ENCODE measurements at regions of chr1 and their contacts with region 1.

Region 1: GRCh38 chr1:7366955-7367665 is 404.0 kb upstream of the VAMP3 start:
- DNase-seq: peak in 1 of 2 donors; percentile 46
- ATAC-seq: peak in 3 of 8 donors; percentile 2 to 16 (median 3)
- H3K4me3 ChIP-seq: no peak overlapping the region
- H3K27ac ChIP-seq: peak overlapping the region in 9 of 10 donors; percentile 31 to 81 (median 69)
- H3K4me1 ChIP-seq: peaks cover 0 to 42% (median 6%) of the 10 kb centered on the region in 9 donors
- H3K27me3 ChIP-seq: no peaks in the 10 kb centered on the region
- CTCF ChIP-seq: no peak

Region 2: GRCh38 chr1:7196036-7196911 is 170.8 kb before region 1 on chr1:
- intact Hi-C with region 1: no loop called
- DNase-seq: no peak
- ATAC-seq: no peak
- H3K4me3 ChIP-seq: no peak overlapping the region
- H3K27ac ChIP-seq: no peak overlapping the region
- H3K4me1 ChIP-seq: no peaks in the 10 kb centered on the region
- H3K27me3 ChIP-seq: peaks cover 0 to 30% (median 19%) of the 10 kb centered on the region in 7 donors
- CTCF ChIP-seq: no peak

Region 3: DNA sequence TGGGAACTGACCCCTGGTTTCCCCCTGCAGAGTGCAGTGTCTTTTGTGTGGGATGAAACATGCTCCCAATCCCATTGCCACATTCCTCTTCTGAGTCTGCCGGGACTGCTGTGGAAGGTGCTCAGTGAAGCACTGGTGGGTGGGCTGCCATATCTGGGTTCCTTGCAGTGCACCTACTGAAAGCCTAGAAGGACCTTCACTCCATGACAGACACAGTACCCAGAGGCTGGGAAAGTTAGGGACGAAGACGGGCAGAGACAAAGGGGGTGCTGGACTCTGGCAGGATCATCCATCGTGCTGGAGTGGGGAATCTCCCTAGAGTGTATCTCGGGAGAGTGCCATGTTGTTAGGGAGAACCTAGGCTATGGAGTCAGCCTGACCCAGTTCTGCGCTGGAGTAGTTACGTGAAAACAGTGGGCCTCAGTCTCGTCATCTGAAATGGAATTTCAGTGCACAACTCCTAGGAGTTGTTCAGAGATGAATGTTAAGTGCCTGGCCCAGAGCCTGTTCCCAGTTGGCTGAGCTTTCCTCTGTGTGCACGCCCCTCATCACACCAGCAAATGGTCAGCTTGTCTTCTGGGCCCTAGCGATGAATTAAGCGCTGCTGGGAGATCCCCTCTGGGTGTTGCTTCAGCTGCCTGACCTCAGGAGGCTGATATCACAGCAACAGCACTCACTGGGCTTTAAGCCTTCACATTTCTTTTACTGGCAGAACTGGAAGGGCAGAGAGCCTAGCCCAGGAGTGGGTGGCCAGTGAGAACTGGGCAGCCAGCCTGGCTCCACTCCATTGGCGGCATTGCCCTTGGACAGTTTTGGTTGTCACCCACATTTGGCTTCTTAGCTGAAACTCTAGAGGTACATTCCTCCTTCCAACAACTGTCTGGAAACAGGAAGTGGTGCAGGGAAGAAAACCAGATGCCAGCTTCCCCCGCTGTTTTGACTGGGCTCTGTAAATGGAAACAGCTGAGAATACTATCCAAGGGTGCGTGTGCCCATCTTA is 75.8 kb before region 1 on chr1:
- intact Hi-C with region 1: loop called in 4 of 10 experiments (anchors 2 to 10 kb)
- DNase-seq: peak; percentile 66 to 81
- ATAC-seq: peak; percentile 78 to 94 (median 91)
- H3K4me3 ChIP-seq: no peak overlapping the region
- H3K27ac ChIP-seq: peak overlapping the region in 9 of 10 donors; percentile 31 to 79 (median 64)
- H3K4me1 ChIP-seq: peaks cover 0 to 26% (median 14%) of the 10 kb centered on the region in 9 donors
- H3K27me3 ChIP-seq: no peaks in the 10 kb centered on the region
- CTCF ChIP-seq: no peak

Region 4: GRCh38 chr1:7299329-7299799 is 67.7 kb before region 1 on chr1:
- intact Hi-C with region 1: loop called in 3 of 10 experiments (anchors 5 to 10 kb)
- DNase-seq: peak; percentile 56 to 59
- ATAC-seq: peak; percentile 63 to 94 (median 86)
- H3K4me3 ChIP-seq: no peak overlapping the region
- H3K27ac ChIP-seq: peak overlapping the region in 3 of 10 donors; percentile 2 to 77 (median 4)
- H3K4me1 ChIP-seq: peaks cover 0 to 18% (median 15%) of the 10 kb centered on the region in 9 donors
- H3K27me3 ChIP-seq: no peaks in the 10 kb centered on the region
- CTCF ChIP-seq: no peak

Region 5: DNA sequence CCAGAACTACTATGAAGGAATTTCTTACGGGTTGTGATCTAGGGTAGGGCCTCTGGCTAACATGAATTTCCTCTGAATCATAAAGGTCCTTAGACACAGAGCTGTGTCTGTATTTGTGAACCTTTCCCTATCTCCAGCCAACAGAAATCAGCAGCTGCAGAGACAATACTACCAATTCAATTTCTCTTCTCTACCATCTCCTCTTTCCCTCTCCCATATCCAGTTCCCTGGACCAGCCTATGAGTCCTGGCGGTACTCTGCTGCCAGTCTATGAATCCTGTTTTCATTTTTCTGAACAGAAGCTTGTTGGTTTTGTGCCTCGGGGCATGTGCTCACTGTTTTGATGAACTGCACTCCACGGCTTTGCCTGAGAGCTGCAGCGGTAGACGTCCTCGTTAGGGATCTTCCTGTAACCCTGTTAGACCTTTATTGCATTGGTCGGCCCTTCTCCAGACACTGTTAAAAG is 54.0 kb before region 1 on chr1:
- intact Hi-C with region 1: no loop called
- DNase-seq: no peak
- ATAC-seq: no peak
- H3K4me3 ChIP-seq: no peak overlapping the region
- H3K27ac ChIP-seq: no peak overlapping the region
- H3K4me1 ChIP-seq: no peaks in the 10 kb centered on the region
- H3K27me3 ChIP-seq: no peaks in the 10 kb centered on the region
- CTCF ChIP-seq: no peak

Region 6: DNA sequence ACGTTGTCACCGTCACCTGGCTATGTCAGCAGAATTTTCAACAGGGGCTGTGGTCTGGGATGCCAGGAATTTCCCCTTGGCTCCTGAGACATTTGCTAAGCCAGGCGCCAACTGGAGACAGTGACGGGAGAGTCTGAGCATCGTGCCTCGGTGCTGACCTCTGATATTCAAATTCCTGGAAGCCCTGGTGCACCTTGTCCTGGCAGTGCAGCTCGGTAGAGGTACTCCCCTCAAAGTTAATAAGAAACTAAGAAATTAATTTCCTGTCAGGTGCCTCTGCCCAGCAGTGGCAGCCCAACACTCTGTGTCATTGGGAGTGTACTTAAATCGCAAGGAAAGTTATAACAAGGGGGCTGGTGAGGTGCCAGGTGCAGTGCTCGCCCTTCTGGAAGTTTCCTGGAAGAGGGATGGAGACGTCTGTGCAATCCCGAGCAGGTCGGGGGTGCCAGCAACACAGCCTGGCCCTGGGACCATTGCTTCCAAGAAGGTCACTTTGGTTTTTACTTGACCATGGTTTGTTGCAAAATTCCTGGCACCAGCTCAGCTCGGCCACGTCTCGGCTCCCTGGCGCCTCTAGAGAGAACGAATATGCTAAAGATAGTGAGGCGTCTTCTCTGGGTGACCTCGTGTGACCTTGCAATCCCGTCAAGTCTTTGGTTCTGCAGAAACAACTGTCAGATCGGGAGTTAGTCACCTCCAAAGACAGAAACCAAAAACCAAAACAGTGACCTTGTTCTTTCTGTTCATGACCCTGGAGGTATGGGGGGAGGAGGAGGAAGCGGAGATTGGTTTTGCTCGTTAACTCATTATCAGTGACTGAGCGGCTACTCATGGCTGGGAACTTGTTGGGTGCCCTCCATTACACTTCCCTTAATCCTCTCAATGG is 254.5 kb after region 1 on chr1:
- intact Hi-C with region 1: loop called in 1 of 10 experiments (anchors 10 kb)
- DNase-seq: no peak
- ATAC-seq: peak in 1 of 8 donors; percentile 55
- H3K4me3 ChIP-seq: no peak overlapping the region
- H3K27ac ChIP-seq: no peak overlapping the region
- H3K4me1 ChIP-seq: peaks cover 0 to 19% (median 12%) of the 10 kb centered on the region in 9 donors
- H3K27me3 ChIP-seq: peaks cover 0 to 10% (median 0%) of the 10 kb centered on the region in 7 donors
- CTCF ChIP-seq: no peak

Measured in heart right ventricle (tissue), 16 donors.